Motor neuron (in vitro differentiated cells): ENCODE measurements at regions of chr3 and their contacts with region 1.

Region 1: DNA sequence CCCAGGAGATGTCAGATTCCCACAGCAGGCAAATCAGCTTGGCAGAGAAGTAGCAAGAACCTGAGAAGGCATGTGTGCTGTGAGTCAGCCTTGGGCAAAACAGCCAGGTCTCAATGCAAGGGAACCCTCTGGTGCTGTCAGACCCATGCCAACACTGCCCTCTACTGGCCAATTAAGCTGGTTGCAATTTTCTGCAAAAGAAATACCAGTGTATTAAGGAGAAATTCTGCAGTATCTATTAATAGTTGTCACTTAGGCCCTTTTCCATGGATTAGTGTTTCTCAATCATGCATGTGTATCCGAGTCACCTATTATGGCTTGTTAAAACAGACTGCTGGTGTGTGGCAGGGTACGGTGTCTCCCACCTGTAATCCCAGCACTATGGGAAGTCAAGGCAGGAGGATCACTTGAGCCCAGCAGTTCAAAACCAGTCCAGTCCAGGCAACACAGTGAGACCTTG is 26.2 kb downstream of the MAP4 start:
- ATAC-seq: peak; percentile 71 to 99 (median 92)
- H3K4me3 ChIP-seq: no peak overlapping the region
- H3K27ac ChIP-seq: no peak overlapping the region
- H3K4me1 ChIP-seq: no peaks in the 10 kb centered on the region

Region 2: GRCh38 chr3:47824541-47825473 is 165.2 kb before region 1 on chr3:
- in situ Hi-C with region 1: loop called in 3 of 9 experiments (anchors 10 to 25 kb)
- ATAC-seq: peak; percentile 98 to 99 (median 99)
- H3K4me3 ChIP-seq: peak overlapping the region; percentile 63 to 91 (median 89)
- H3K27ac ChIP-seq: peak overlapping the region; percentile 64 to 83
- H3K4me1 ChIP-seq: peaks cover 9 to 14% of the 10 kb centered on the region in 2 donors

Region 3: GRCh38 chr3:47836986-47837385 is 153.0 kb before region 1 on chr3:
- in situ Hi-C with region 1: loop called in 3 of 9 experiments (anchors 10 to 25 kb)
- ATAC-seq: peak in 3 of 8 experiments; percentile 41 to 81 (median 68)
- H3K4me3 ChIP-seq: no peak overlapping the region
- H3K27ac ChIP-seq: no peak overlapping the region
- H3K4me1 ChIP-seq: no peaks in the 10 kb centered on the region

Region 4: DNA sequence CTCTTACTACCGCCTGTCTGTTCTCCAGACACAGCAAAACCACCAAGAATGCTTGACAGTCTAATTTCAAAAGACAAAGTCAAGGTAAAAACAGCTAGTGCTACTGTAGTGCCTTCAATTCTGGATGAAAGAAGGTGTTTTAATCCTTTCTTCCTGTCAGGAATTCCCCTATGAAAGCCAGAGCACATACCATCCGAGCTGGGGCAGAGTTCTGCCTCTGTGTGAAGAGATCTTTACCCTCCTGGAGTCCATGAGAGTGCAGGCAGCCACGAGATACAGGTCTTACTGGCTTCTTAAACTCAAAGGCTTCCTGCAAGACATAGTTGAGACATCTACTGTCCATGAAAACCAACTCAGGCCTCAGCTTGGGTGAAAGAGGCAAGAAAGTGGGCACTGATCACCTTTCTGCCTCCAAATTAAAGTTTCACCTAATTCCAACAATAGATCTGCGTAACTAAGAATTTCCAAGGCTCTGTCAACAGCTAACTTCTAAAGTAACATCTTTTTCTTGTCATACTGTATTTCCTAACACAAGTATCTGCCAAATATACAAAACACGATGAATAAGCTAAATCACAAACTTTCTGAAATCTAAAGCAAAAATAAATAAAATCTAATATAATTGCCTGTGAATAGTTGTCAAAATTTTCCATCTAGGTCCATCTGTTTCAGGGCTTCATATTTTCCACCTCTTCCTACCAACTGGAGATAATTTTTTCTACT is 190.7 kb after region 1 on chr3:
- in situ Hi-C with region 1: no loop called
- ATAC-seq: no peak
- H3K4me3 ChIP-seq: no peak overlapping the region
- H3K27ac ChIP-seq: no peak overlapping the region
- H3K4me1 ChIP-seq: no peaks in the 10 kb centered on the region